ENCODE measurements at regions of chr1 and their contacts with region 1.

Region 1: DNA sequence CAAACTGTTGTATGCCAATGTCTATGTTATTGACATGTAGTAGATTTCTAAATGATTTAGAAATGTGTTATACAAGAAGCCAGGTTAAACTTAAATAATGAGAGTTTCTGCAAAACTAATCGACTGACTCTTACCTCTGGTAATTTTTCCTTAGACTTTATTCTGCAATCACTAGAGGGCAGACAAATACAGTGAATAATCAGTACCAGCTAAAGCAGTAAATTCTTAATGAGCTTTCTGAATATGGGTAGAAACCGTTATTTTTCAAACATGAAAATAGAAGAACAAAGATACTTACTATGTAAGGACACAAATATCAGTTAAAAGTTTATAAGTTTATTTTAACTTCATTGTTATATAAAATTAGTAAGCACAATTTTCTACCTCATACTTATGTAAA is 97.9 kb upstream of the RGS1 start:
- DNase-seq: peak; percentile 63
- ATAC-seq: peak; percentile 87
- H3K4me3 ChIP-seq: no peak overlapping the region
- H3K27ac ChIP-seq: no peak overlapping the region
- H3K4me1 ChIP-seq: no peaks in the 10 kb centered on the region
- H3K27me3 ChIP-seq: no peaks in the 10 kb centered on the region
- CTCF ChIP-seq: peak; percentile 77
- POLR2A ChIP-seq: 0 out of 2 replicates have a peak, but pooled peaks have one; percentile 32
- RAD21 ChIP-seq: peak; percentile 90

Region 2: DNA sequence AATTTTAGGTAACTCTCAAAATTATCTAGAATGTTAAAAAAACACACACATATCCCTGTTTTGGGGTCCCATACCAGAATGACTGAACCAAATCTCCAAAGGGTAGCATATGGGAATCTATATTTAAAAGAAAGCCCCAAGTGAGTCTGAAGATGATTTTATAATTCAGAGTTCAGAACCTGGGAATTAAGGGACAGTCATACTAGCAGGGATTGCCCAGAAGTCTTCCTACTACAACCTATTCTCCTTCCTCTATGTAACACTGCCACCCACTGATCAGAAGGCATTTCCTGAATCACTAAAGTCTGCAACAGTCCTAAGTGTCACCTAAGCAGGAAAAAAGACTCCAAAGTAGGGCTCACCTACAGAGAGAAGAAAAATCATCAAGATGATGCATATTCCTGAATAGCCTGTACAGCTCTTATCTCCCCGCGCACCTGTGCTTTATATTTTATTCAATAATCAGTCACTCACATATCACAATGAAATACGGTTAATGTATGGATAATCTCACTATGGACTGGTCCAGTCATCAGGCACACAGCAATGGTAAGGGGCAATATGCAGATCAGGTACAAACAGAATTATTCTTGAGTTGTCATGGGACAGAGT is 102.8 kb after region 1 on chr1:
- CTCF ChIA-PET with region 1: interaction called, 5 read pairs
- POLR2A ChIA-PET with region 1: no interaction called
- dilution Hi-C with region 1: no loop called
- in situ Hi-C with region 1: loop called (anchors 10 kb)
- intact Hi-C with region 1: loop called (anchors 1 kb)
- DNase-seq: peak; percentile 68
- ATAC-seq: peak; percentile 86
- H3K4me3 ChIP-seq: no peak overlapping the region
- H3K27ac ChIP-seq: no peak overlapping the region
- H3K4me1 ChIP-seq: no peaks in the 10 kb centered on the region
- H3K27me3 ChIP-seq: no peaks in the 10 kb centered on the region
- CTCF ChIP-seq: peak; percentile 69
- POLR2A ChIP-seq: no peak
- RAD21 ChIP-seq: peak; percentile 81

Region 3: GRCh38 chr1:192797891-192798290 is 320.3 kb after region 1 on chr1:
- CTCF ChIA-PET with region 1: no interaction called
- POLR2A ChIA-PET with region 1: no interaction called
- dilution Hi-C with region 1: no loop called
- in situ Hi-C with region 1: loop called (anchors 5 kb)
- intact Hi-C with region 1: no loop called
- DNase-seq: no peak
- ATAC-seq: no peak
- H3K4me3 ChIP-seq: no peak overlapping the region
- H3K27ac ChIP-seq: no peak overlapping the region
- H3K4me1 ChIP-seq: peaks cover 2% of the 10 kb centered on the region
- H3K27me3 ChIP-seq: no peaks in the 10 kb centered on the region
- CTCF ChIP-seq: no peak
- POLR2A ChIP-seq: no peak
- RAD21 ChIP-seq: no peak

Region 4: DNA sequence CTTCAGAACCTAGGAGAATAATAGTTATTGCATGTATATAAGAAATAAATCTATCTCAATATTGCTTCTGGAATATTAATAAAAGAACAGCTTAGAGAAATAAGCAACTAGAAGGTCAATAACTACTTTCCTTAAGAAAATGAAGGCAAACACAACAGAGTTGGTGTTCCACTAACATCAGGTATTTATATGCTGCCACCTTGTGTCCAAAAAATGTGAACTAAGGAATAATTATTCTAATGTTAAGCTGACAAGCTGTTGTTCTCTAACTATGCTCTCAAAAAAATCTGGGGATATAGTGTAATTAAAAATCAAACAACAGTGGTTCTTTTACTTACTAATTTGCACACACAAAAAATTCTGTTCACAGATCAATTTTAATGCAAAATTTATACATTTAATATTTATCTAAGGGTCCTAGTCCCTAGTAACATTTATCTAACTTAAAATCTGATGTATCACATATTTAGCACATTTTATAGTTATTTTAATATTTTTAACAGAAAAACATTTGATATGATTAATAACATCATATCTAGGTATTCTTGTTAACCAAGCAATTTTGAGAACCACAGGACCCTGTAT is 541.9 kb after region 1 on chr1:
- CTCF ChIA-PET with region 1: no interaction called
- POLR2A ChIA-PET with region 1: no interaction called
- dilution Hi-C with region 1: loop called (anchors 25 kb)
- in situ Hi-C with region 1: loop called (anchors 5 kb)
- intact Hi-C with region 1: loop called (anchors 1 kb)
- DNase-seq: peak; percentile 64
- ATAC-seq: peak; percentile 66
- H3K4me3 ChIP-seq: no peak overlapping the region
- H3K27ac ChIP-seq: no peak overlapping the region
- H3K4me1 ChIP-seq: no peaks in the 10 kb centered on the region
- H3K27me3 ChIP-seq: no peaks in the 10 kb centered on the region
- CTCF ChIP-seq: peak; percentile 59
- POLR2A ChIP-seq: no peak
- RAD21 ChIP-seq: peak; percentile 74

Region 5: DNA sequence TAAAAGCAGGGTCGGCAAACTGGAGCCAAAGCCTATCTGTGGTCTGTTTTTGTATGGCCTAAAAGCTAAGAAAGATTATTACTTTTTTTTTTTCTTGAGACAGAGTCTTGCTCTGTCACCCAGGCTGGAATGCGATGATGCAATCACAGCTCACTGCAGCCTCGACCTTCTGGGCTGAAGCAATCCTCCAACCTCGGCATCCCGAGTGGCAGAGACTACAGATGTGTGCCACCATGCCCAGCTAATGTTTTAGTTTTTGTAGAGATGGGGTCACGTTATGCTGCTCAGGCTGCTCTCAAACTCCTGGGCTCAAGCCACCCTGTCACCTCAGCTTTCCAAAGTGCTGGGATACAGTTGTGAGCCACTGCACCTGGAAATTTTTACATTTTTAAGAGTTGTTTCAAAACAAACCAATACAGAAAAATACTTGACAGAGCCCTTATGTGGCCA is 634.0 kb after region 1 on chr1:
- CTCF ChIA-PET with region 1: no interaction called
- POLR2A ChIA-PET with region 1: no interaction called
- dilution Hi-C with region 1: no loop called
- in situ Hi-C with region 1: loop called (anchors 10 kb)
- intact Hi-C with region 1: no loop called
- DNase-seq: peak; percentile 87
- ATAC-seq: peak; percentile 73
- H3K4me3 ChIP-seq: no peak overlapping the region
- H3K27ac ChIP-seq: peak overlapping the region; percentile 66
- H3K4me1 ChIP-seq: peaks cover 11% of the 10 kb centered on the region
- H3K27me3 ChIP-seq: no peaks in the 10 kb centered on the region
- CTCF ChIP-seq: no peak
- POLR2A ChIP-seq: no peak
- RAD21 ChIP-seq: no peak